CD4-positive, alpha-beta T cell (primary cell): ENCODE measurements at regions of chr20 and their contacts with region 1.

Region 1: DNA sequence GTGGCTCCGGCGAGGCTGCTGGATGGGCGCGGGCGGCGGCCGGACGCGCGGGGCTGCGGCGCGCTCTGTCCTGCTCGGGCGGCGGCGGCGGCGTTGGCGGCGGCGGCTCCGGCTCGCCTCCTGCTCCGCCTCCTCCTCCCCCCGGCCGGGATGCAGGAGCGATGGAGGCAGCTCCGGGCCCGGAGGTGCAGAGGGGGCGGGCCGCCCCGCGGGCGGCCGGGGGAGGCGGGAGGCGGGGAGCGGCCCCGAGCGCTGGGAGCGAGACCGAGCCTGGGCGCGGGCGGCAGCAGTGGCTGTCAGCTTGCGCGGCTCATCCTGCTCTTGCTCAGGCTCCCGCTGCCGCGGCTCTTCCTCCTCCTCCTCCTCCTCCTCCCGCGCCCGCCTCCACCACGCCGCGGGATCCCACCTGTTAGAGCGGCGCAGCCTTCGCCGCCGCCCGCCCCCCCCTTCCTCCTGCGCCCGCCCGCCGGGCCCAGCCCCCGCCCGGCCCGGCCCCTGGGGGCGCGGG is at the start of gene NOL4L:
- DNase-seq: peak in 13 of 14 experiments; percentile 14 to 75 (median 41)
- ATAC-seq: peak; percentile 38
- H3K4me3 ChIP-seq: peak within 1 kb of the TSS; percentile 62
- H3K4me3 Mint-ChIP-seq: peak within 1 kb of the TSS; percentile 100
- H3K27ac ChIP-seq: peak within 1 kb of the TSS in 1 of 2 donors; percentile 35
- H3K27ac Mint-ChIP-seq: peak within 1 kb of the TSS; percentile 95
- H3K4me1 ChIP-seq: peaks cover 41% of the 10 kb centered on the region
- H3K4me1 Mint-ChIP-seq: peaks cover 45% of the 10 kb centered on the region
- H3K27me3 ChIP-seq: no peaks in the 10 kb centered on the region
- H3K27me3 Mint-ChIP-seq: peaks cover 5% of the 10 kb centered on the region
- CTCF ChIP-seq: no peak
- total RNA-seq, gene NOL4L: 53.1 to 55.6 TPM

Region 2: GRCh38 chr20:32077190-32077589 is 507.9 kb before region 1 on chr20:
- CTCF ChIA-PET with region 1: no interaction called
- POLR2A ChIA-PET with region 1: no interaction called
- intact Hi-C with region 1: no loop called
- DNase-seq: no peak
- ATAC-seq: no peak
- H3K4me3 ChIP-seq: no peak overlapping the region
- H3K4me3 Mint-ChIP-seq: no peak overlapping the region
- H3K27ac ChIP-seq: no peak overlapping the region
- H3K27ac Mint-ChIP-seq: no peak overlapping the region
- H3K4me1 ChIP-seq: no peaks in the 10 kb centered on the region
- H3K4me1 Mint-ChIP-seq: no peaks in the 10 kb centered on the region
- H3K27me3 ChIP-seq: peaks cover 0 to 5% of the 10 kb centered on the region in 2 experiments
- H3K27me3 Mint-ChIP-seq: peaks cover 17% of the 10 kb centered on the region
- CTCF ChIP-seq: no peak

Region 3: DNA sequence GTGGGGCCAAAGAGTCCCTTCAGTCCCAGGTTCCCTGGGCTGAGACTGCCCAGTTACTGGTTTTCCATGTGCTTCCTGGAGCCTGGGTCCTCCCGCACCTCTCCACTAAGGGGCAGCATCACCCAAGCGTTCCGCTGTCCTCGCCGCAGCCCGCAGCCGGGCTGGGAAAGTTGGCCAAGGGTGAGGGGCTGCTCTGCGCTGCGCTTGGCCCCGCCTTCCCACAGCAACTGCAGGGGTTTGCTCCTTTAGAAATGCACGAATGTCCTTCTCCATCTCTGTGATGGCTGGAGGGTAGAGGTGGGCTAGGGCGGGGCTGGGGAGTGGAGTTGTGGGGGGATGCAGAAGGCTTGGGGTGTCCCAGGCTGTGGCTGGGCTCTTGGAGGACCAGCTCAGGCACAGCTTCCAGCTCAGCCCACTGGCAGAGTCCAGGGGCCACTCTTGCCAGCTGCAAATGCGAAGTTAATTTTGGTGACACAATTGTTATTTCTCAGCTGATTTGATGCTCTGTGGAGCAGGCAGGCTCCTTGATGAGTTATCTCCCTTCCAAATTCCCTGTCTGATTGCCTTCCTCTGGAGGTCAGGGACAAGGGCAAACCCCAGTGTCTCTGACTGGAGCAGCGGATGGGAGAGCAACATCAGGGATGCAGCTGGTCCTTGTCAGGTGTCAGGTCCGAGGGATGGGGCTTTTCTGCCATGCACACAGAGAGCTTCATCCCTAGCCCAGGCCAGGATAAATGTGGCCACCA is 63.1 kb before region 1 on chr20:
- CTCF ChIA-PET with region 1: interaction called, 6 read pairs
- POLR2A ChIA-PET with region 1: interaction called, 20 read pairs
- intact Hi-C with region 1: loop called in 1 of 2 experiments (anchors 2 kb)
- DNase-seq: peak; percentile 52 to 86 (median 65)
- ATAC-seq: peak; percentile 85
- H3K4me3 ChIP-seq: peak overlapping the region; percentile 5
- H3K4me3 Mint-ChIP-seq: peak overlapping the region; percentile 35
- H3K27ac ChIP-seq: peak overlapping the region; percentile 55 to 69
- H3K27ac Mint-ChIP-seq: peak overlapping the region; percentile 99
- H3K4me1 ChIP-seq: peaks cover 72% of the 10 kb centered on the region
- H3K4me1 Mint-ChIP-seq: peaks cover 61% of the 10 kb centered on the region
- H3K27me3 ChIP-seq: no peaks in the 10 kb centered on the region
- H3K27me3 Mint-ChIP-seq: no peaks in the 10 kb centered on the region
- CTCF ChIP-seq: peak; percentile 85

Region 4: DNA sequence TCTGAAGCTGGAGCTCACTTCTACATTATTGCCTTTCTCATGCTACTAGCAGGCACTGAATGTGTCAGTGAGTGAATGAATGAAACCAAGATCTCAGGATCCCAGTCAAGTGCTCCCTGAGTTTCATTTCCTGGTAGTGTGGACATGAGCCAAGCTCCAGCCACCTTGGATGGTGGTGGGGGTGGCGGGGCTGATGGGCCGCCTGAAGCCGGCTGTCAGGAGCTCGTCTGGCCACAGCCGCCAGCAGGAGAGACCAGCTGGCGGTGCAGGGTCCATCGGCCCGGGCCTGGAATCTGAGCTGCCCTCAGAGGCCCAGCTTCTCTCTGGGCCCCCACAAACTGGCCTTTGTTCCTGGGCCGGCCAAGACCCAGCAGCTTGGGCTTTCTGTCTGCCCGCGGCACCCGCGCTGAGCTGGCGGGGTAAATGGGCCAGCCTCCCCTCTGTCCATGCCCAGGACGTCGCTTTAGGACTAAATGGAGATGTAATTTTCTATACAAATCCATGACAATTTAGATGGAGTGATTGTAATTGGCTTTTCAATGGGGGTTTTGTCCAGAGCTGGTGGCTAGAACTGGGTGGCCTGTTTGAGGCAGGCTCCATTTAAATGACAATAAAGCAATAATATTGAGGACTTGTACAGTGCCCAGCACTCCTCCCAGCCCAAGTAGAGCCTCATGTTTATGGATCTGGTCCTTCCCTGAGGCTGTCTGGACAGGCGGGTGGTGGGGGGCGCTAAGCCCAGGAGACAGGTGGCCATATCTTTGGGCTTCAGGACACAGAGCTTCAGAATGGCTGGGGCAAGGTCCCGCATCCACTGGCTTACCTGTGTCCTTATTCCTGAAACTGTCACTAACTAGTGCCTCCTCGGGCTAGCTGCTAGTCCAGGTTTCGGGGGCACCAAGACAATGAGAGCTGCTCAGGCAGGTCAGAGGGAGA is 43.5 kb before region 1 on chr20:
- CTCF ChIA-PET with region 1: interaction called, 7 read pairs
- POLR2A ChIA-PET with region 1: interaction called, 178 read pairs
- intact Hi-C with region 1: loop called (anchors 2 kb)
- DNase-seq: no peak
- ATAC-seq: no peak
- H3K4me3 ChIP-seq: no peak overlapping the region
- H3K4me3 Mint-ChIP-seq: peak overlapping the region; percentile 28
- H3K27ac ChIP-seq: peak overlapping the region; percentile 86 to 96
- H3K27ac Mint-ChIP-seq: peak overlapping the region; percentile 99
- H3K4me1 ChIP-seq: peaks cover 92% of the 10 kb centered on the region
- H3K4me1 Mint-ChIP-seq: peaks cover 85% of the 10 kb centered on the region
- H3K27me3 ChIP-seq: no peaks in the 10 kb centered on the region
- H3K27me3 Mint-ChIP-seq: no peaks in the 10 kb centered on the region
- CTCF ChIP-seq: no peak